Activated CD4-positive, alpha-beta T cell treated with anti-CD3 and anti-CD28 coated beads for 36 hours (primary cell): ENCODE measurements at regions of chr3 and their contacts with region 1.

Region 1: GRCh38 chr3:45915518-45916231 is 27.6 kb upstream of the CXCR6 start:
- DNase-seq: peak; percentile 88
- ATAC-seq: peak; percentile 94
- H3K4me3 Mint-ChIP-seq: peak overlapping the region; percentile 22
- H3K27ac Mint-ChIP-seq: peak overlapping the region; percentile 37
- H3K4me1 Mint-ChIP-seq: peaks cover 33% of the 10 kb centered on the region
- H3K27me3 Mint-ChIP-seq: peaks cover 33% of the 10 kb centered on the region

Region 2: DNA sequence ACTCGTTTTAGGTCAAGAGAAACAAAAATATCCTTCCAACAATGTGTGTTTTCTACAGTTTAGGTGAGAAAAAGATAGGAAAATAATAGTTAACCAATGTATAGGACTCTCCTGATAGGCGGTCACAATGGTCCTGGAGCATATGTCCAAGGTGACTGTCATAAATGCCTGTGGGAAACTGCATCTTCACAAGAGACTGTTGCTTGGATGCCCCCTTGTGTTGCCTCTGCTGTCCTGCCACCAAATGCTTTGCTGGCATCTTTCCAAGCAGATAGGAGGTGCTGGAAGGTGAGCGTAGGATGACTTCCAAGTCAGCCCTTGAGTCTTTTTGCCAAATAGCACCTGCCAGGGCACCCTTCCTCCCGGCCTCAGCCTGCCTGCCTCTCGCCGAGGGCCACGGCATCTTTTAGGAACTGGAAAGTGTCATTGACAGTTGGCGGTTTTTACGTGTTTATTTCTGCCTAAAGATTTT is 250.5 kb before region 1 on chr3:
- CTCF ChIA-PET with region 1: no interaction called
- POLR2A ChIA-PET with region 1: no interaction called
- intact Hi-C with region 1: loop called (anchors 5 kb)
- DNase-seq: peak; percentile 76
- ATAC-seq: peak; percentile 23
- H3K4me3 Mint-ChIP-seq: peak overlapping the region; percentile 67
- H3K27ac Mint-ChIP-seq: peak overlapping the region; percentile 68
- H3K4me1 Mint-ChIP-seq: peaks cover 54% of the 10 kb centered on the region
- H3K27me3 Mint-ChIP-seq: no peaks in the 10 kb centered on the region

Region 3: DNA sequence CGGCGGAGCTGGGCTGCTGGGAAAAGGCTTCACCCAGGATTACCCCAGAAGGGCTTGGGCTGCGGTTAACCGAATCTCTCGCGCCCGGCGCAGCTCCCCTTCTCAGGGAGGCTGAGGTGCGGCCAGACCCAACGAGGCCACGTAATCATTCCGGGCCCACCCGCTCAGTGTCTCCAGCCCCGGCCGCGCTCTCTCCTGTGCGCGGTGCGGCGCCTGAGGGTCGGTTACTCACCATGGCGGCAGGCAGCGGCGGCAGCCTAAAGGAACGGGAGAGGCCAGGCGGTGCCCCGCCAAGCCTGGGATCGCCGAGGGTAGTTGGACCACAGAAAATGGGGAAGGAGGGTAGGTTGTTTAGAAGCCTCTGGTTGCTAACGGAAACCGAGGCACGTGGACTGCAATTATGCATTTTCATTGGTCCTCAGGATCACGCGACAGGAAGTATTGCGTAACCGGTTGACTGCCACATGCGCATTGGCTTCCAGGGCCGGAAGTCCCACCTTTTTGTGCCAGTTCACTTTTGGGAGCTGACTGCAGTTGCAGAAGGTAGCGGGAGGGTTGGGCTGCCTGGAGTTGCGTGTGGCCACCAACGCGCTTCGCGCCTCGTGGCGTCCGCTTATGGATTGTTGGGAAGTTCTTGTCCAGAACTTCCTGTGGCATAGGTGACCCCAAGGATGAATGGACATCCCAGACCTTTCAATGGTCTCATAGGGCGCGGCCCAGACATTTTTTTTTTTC is 73.8 kb before region 1 on chr3 and contains the start of gene LZTFL1:
- CTCF ChIA-PET with region 1: no interaction called
- POLR2A ChIA-PET with region 1: no interaction called
- intact Hi-C with region 1: loop called in 1 of 2 experiments (anchors 2 kb)
- DNase-seq: peak; percentile 94
- ATAC-seq: peak; percentile 89
- H3K4me3 Mint-ChIP-seq: peak within 1 kb of the TSS; percentile 87
- H3K27ac Mint-ChIP-seq: peak within 1 kb of the TSS; percentile 82
- H3K4me1 Mint-ChIP-seq: peaks cover 14% of the 10 kb centered on the region
- H3K27me3 Mint-ChIP-seq: no peaks in the 10 kb centered on the region
- total RNA-seq, gene LZTFL1: 4.5 to 6.6 TPM

Region 4: DNA sequence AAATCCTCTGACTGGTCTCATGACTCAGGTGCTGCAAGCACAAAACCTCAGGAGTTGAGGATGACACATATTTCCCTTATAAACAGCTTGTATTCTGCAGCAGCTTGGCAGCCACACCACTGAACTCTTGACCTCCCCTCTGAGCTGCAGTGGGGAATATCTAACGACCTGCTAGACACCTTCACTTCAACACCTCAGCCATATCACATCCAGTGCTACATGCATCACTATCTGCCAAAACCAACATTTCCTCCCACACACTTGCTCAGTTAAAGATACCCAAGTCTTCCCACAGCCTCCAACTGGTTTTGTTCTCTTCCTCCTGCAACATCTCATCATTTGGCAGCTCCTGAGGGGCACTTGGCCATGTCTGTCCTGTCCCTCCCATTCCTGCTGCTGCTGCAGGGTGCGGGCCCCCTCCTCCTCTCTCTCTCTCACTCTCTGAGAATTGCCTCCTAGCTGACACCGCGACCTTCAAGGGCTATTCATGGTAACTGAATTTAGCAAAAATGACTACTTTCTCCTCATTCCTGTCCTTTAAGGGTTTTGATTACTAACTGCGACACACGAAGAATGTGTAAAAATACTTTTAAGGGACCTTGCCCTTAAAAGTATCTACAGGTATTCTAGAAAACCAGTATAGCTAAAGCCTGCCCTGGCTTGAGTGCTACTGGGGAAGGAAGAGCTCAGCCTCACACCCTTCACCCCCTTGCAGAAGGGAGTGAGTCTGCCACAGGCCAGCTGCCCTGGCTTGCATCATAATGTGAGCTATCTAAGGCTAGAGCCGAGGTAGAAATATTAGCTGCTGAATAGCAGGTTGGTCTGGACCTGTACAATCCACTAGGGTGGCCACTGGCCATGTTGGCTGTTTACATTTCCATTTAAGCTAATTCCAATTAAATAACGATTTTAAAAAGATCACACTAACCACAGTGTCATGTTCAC is 34.3 kb before region 1 on chr3:
- CTCF ChIA-PET with region 1: no interaction called
- POLR2A ChIA-PET with region 1: no interaction called
- intact Hi-C with region 1: loop called (anchors 1 to 5 kb)
- DNase-seq: peak; percentile 63
- ATAC-seq: peak; percentile 92
- H3K4me3 Mint-ChIP-seq: no peak overlapping the region
- H3K27ac Mint-ChIP-seq: peak overlapping the region; percentile 2
- H3K4me1 Mint-ChIP-seq: peaks cover 27% of the 10 kb centered on the region
- H3K27me3 Mint-ChIP-seq: peaks cover 40% of the 10 kb centered on the region

Region 5: GRCh38 chr3:45929042-45929679 is 13.5 kb after region 1 on chr3:
- CTCF ChIA-PET with region 1: interaction called, 12 read pairs
- POLR2A ChIA-PET with region 1: no interaction called
- intact Hi-C with region 1: no loop called
- DNase-seq: peak; percentile 82
- ATAC-seq: peak; percentile 95
- H3K4me3 Mint-ChIP-seq: no peak overlapping the region
- H3K27ac Mint-ChIP-seq: no peak overlapping the region
- H3K4me1 Mint-ChIP-seq: no peaks in the 10 kb centered on the region
- H3K27me3 Mint-ChIP-seq: no peaks in the 10 kb centered on the region

Region 6: GRCh38 chr3:46663591-46664135 is 748.0 kb after region 1 on chr3:
- CTCF ChIA-PET with region 1: no interaction called
- POLR2A ChIA-PET with region 1: no interaction called
- intact Hi-C with region 1: no loop called
- DNase-seq: no peak
- ATAC-seq: peak; percentile 36
- H3K4me3 Mint-ChIP-seq: no peak overlapping the region
- H3K27ac Mint-ChIP-seq: no peak overlapping the region
- H3K4me1 Mint-ChIP-seq: no peaks in the 10 kb centered on the region
- H3K27me3 Mint-ChIP-seq: no peaks in the 10 kb centered on the region